ENCODE measurements at regions of chr2 and their contacts with region 1.

Region 1: DNA sequence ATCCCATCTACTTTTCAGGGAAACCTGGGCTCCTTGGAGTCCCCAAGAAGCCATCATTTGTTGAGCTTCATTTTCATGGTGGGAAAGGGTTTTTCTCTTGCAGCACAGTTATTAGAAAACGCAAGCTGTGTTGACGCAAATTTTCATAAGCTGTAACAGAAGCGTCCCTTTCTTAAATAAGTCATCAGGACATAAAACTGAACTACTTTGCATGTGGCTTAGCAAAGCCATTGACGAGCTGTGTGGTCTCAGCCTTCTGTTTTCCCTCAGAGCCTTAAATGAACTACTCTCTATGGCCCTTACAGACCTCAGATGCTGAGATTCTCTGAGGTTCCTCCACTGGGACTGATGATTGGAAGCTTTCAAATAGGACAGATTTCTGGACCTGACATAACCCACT is 85.1 kb downstream of the ARL4C start:
- DNase-seq: peak; percentile 54
- ATAC-seq: peak; percentile 85
- H3K4me3 ChIP-seq: no peak overlapping the region
- H3K27ac ChIP-seq: no peak overlapping the region; the same call in none of the 2 replicates
- H3K4me1 ChIP-seq: peaks cover 7% of the 10 kb centered on the region
- H3K27me3 ChIP-seq: no peaks in the 10 kb centered on the region
- CTCF ChIP-seq: no peak
- EP300 ChIP-seq: peak in 1 of 2 experiments; percentile 31; a peak in 1 of 4 replicates
- POLR2A ChIP-seq: no peak
- RAD21 ChIP-seq: no peak

Region 2: GRCh38 chr2:234388554-234388953 is 23.2 kb before region 1 on chr2:
- CTCF ChIA-PET with region 1: no interaction called
- POLR2A ChIA-PET with region 1: no interaction called
- RAD21 ChIA-PET with region 1: no interaction called
- SMC1A ChIA-PET with region 1: no interaction called
- in situ Hi-C with region 1: no loop called
- intact Hi-C with region 1: no loop called
- DNase-seq: no peak
- ATAC-seq: no peak
- H3K4me3 ChIP-seq: no peak overlapping the region
- H3K27ac ChIP-seq: no peak overlapping the region
- H3K4me1 ChIP-seq: no peaks in the 10 kb centered on the region
- H3K27me3 ChIP-seq: no peaks in the 10 kb centered on the region
- CTCF ChIP-seq: no peak
- EP300 ChIP-seq: no peak
- POLR2A ChIP-seq: no peak
- RAD21 ChIP-seq: no peak

Region 3: DNA sequence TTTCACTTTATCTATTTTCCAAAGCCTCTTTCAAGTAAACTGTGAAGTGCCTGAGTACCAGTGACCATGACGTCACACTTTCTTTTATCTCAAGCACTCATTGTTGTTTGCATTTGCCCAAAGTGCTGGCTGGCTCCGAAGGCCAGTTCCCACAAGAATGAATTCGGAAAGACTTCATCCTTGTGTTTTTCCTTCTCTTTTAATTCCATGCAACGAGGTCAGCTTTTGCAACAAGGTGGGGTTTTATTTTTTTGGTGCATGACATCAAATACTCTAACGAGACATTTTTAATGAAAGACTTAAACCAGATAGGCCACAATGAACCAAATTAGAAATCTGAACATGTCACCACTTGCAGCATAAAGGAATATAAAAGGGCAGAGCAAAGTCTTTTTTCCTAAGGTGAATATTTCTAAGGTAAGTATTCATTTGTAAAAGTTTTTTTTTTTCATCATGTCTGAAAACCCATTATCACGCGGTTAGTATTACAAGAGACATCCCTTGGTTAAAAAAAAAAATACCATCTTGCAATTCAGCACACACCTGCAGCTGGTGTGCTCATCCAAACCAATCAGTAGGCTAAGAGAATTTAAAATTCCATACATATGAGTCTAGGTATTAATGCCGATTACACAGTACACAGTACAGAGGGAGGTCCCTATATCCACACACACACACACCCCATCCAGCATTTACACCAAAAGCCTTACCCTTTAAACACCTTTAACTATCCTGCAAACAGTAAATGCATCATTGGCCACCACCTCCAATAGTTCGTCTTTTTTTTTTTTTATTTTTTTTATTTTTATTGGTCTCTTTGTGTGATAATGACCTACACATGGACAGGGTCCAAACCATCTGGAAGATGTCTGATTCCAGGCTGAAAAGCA is 82.8 kb after region 1 on chr2:
- CTCF ChIA-PET with region 1: no interaction called
- POLR2A ChIA-PET with region 1: no interaction called
- RAD21 ChIA-PET with region 1: no interaction called
- SMC1A ChIA-PET with region 1: no interaction called
- in situ Hi-C with region 1: no loop called
- intact Hi-C with region 1: loop called (anchors 5 kb)
- DNase-seq: no peak
- ATAC-seq: no peak
- H3K4me3 ChIP-seq: no peak overlapping the region
- H3K27ac ChIP-seq: no peak overlapping the region
- H3K4me1 ChIP-seq: peaks cover 13% of the 10 kb centered on the region
- H3K27me3 ChIP-seq: peaks cover 3 to 11% of the 10 kb centered on the region in 2 experiments
- CTCF ChIP-seq: no peak
- EP300 ChIP-seq: no peak
- POLR2A ChIP-seq: no peak
- RAD21 ChIP-seq: no peak